ENCODE measurements at regions of chr2 and their contacts with region 1.

Region 1: GRCh38 chr2:172484253-172484652 is 56.9 kb downstream of the ITGA6 start:
- DNase-seq: peak; percentile 40 to 67 (median 50)
- H3K4me3 ChIP-seq: no peak overlapping the region
- H3K27ac ChIP-seq: no peak overlapping the region
- H3K4me1 ChIP-seq: no peaks in the 10 kb centered on the region
- H3K27me3 ChIP-seq: no peaks in the 10 kb centered on the region

Region 2: GRCh38 chr2:172472446-172473033 is 11.7 kb before region 1 on chr2:
- CTCF ChIA-PET with region 1: interaction called, 23 read pairs
- POLR2A ChIA-PET with region 1: no interaction called
- DNase-seq: no peak
- H3K4me3 ChIP-seq: no peak overlapping the region
- H3K27ac ChIP-seq: no peak overlapping the region
- H3K4me1 ChIP-seq: no peaks in the 10 kb centered on the region
- H3K27me3 ChIP-seq: no peaks in the 10 kb centered on the region

Region 3: GRCh38 chr2:172496160-172496608 is 11.9 kb after region 1 on chr2:
- CTCF ChIA-PET with region 1: interaction called, 17 read pairs
- POLR2A ChIA-PET with region 1: no interaction called
- DNase-seq: peak; percentile 46 to 64 (median 60)
- H3K4me3 ChIP-seq: peak overlapping the region in 1 of 7 experiments; percentile 14
- H3K27ac ChIP-seq: no peak overlapping the region
- H3K4me1 ChIP-seq: peaks cover 0 to 19% (median 15%) of the 10 kb centered on the region in 4 experiments
- H3K27me3 ChIP-seq: no peaks in the 10 kb centered on the region

Measured in common myeloid progenitor, CD34-positive (primary cell).